Left ventricle myocardium superior (tissue), 1 donor: ENCODE measurements at regions of chrX and their contacts with region 1.

Region 1: GRCh38 chrX:154979629-154980028 is 42.9 kb downstream of the F8 start:
- DNase-seq: no peak
- ATAC-seq: no peak

Region 2: GRCh38 chrX:155056877-155057792 is 77.5 kb after region 1 on chrX:
- intact Hi-C with region 1: loop called (anchors 5 kb)
- DNase-seq: peak; percentile 66
- ATAC-seq: peak; percentile 92